HCT116 (cell line): ENCODE measurements at regions of chr17 and their contacts with region 1.

Region 1: GRCh38 chr17:68386240-68387087 is 70.8 kb downstream of the WIPI1 start:
- DNase-seq: no peak
- ATAC-seq: no peak
- H3K4me3 ChIP-seq: no peak overlapping the region
- H3K27ac ChIP-seq: peak overlapping the region; percentile 4; the same call in 1 of the 2 replicates
- H3K4me1 ChIP-seq: peaks cover 70 to 79% of the 10 kb centered on the region in 2 experiments
- H3K27me3 ChIP-seq: no peaks in the 10 kb centered on the region
- CTCF ChIP-seq: no peak
- POLR2A ChIP-seq: no peak
- RAD21 ChIP-seq: no peak

Region 2: GRCh38 chr17:68398691-68399637 is 12.5 kb after region 1 on chr17:
- CTCF ChIA-PET with region 1: interaction called, 41 read pairs
- POLR2A ChIA-PET with region 1: interaction called, 17 read pairs
- RAD21 ChIA-PET with region 1: interaction called, 6 to 7 read pairs
- intact Hi-C with region 1: no loop called
- DNase-seq: peak; percentile 72
- ATAC-seq: peak; percentile 94
- H3K4me3 ChIP-seq: no peak overlapping the region
- H3K27ac ChIP-seq: peak overlapping the region; percentile 43
- H3K4me1 ChIP-seq: peaks cover 27 to 35% of the 10 kb centered on the region in 2 experiments
- H3K27me3 ChIP-seq: no peaks in the 10 kb centered on the region
- CTCF ChIP-seq: peak; percentile 97 to 99 (median 99)
- POLR2A ChIP-seq: no peak
- RAD21 ChIP-seq: peak; percentile 99